Panc1 (cell line): ENCODE measurements at regions of chr1 and their contacts with region 1.

Region 1: DNA sequence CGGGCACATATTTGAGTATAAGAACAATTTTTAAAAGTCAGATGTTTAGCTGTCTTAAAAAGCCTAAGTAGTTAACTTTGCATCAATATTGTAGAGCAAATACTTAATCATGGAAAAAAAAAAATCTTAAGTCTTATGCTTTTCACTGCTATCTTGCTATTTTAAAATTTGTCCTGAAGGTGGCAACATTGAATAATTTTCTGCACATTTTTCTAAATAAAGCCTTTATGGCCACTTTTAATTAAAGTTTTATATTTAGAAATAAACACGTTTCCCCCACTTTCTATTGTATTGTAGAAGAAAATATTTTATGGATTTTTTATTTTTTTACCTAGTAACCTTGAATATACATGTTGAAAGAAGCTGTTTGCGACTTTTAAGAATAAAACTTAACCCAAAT is 198.8 kb downstream of the AMY1C start:
- DNase-seq: no peak
- ATAC-seq: no peak
- H3K4me3 ChIP-seq: no peak overlapping the region
- H3K27ac ChIP-seq: no peak overlapping the region
- H3K4me1 ChIP-seq: no peaks in the 10 kb centered on the region
- H3K27me3 ChIP-seq: no peaks in the 10 kb centered on the region
- CTCF ChIP-seq: peak; percentile 25; the same call in 1 of the 2 replicates

Region 2: GRCh38 chr1:103788377-103788776 is 160.1 kb before region 1 on chr1:
- CTCF ChIA-PET with region 1: no interaction called
- POLR2A ChIA-PET with region 1: no interaction called
- in situ Hi-C with region 1: no loop called
- intact Hi-C with region 1: loop called (anchors 5 kb)
- DNase-seq: no peak
- ATAC-seq: no peak
- H3K4me3 ChIP-seq: no peak overlapping the region
- H3K27ac ChIP-seq: no peak overlapping the region
- H3K4me1 ChIP-seq: no peaks in the 10 kb centered on the region
- H3K27me3 ChIP-seq: no peaks in the 10 kb centered on the region
- CTCF ChIP-seq: peak; percentile 42; the same call in 1 of the 2 replicates

Region 3: GRCh38 chr1:104132382-104132973 is 184.0 kb after region 1 on chr1:
- CTCF ChIA-PET with region 1: no interaction called
- POLR2A ChIA-PET with region 1: no interaction called
- in situ Hi-C with region 1: no loop called
- intact Hi-C with region 1: loop called (anchors 5 kb)
- DNase-seq: peak; percentile 15
- ATAC-seq: peak; percentile 86
- H3K4me3 ChIP-seq: no peak overlapping the region
- H3K27ac ChIP-seq: no peak overlapping the region
- H3K4me1 ChIP-seq: no peaks in the 10 kb centered on the region
- H3K27me3 ChIP-seq: no peaks in the 10 kb centered on the region
- CTCF ChIP-seq: peak; percentile 73

Region 4: DNA sequence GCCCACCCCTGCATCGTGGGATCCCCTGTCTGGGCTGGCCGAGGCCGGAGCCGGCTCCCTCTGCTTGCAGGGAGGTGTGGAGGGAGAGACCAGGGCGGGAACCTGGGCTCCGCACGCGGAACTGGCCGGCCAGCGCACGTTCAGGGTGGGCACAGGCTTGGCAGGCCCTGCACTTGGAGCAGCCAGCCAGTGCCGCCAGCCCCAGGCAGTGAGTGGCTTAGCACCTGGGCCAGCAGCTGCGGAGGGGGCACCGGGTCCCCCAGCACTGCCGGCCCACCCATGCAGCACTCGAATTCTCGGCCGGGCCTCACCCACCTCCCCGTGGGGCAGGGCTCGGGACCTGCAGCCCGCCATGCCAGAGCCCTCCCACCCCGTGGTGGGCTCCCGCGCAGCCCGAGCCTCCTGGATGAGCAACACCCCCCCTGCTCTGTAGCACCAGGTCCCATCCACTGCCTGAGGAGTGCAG is 223.8 kb after region 1 on chr1:
- CTCF ChIA-PET with region 1: no interaction called
- POLR2A ChIA-PET with region 1: no interaction called
- in situ Hi-C with region 1: no loop called
- intact Hi-C with region 1: no loop called
- DNase-seq: no peak
- ATAC-seq: no peak
- H3K4me3 ChIP-seq: no peak overlapping the region
- H3K27ac ChIP-seq: no peak overlapping the region
- H3K4me1 ChIP-seq: no peaks in the 10 kb centered on the region
- H3K27me3 ChIP-seq: no peaks in the 10 kb centered on the region
- CTCF ChIP-seq: no peak

Region 5: GRCh38 chr1:104406728-104407127 is 458.2 kb after region 1 on chr1:
- CTCF ChIA-PET with region 1: no interaction called
- POLR2A ChIA-PET with region 1: no interaction called
- in situ Hi-C with region 1: no loop called
- intact Hi-C with region 1: no loop called
- DNase-seq: no peak
- ATAC-seq: no peak
- H3K4me3 ChIP-seq: no peak overlapping the region
- H3K27ac ChIP-seq: no peak overlapping the region
- H3K4me1 ChIP-seq: no peaks in the 10 kb centered on the region
- H3K27me3 ChIP-seq: no peaks in the 10 kb centered on the region
- CTCF ChIP-seq: no peak